AG04449 (cell line): ENCODE measurements at regions of chr16 and their contacts with region 1.

Region 1: GRCh38 chr16:57591086-57591869 is 37.2 kb upstream of the ADGRG1 start:
- DNase-seq: no peak
- H3K4me3 ChIP-seq: no peak overlapping the region; the same call in 1 of the 2 replicates
- CTCF ChIP-seq: peak; percentile 91

Region 2: GRCh38 chr16:57485916-57486857 is 105.1 kb before region 1 on chr16 and contains the start of gene DOK4:
- CTCF ChIA-PET with region 1: no interaction called
- POLR2A ChIA-PET with region 1: no interaction called
- DNase-seq: no peak
- H3K4me3 ChIP-seq: peak within 1 kb of the TSS; percentile 70
- CTCF ChIP-seq: no peak

Region 3: GRCh38 chr16:57517397-57518367 is 73.6 kb before region 1 on chr16:
- CTCF ChIA-PET with region 1: no interaction called
- POLR2A ChIA-PET with region 1: no interaction called
- DNase-seq: no peak
- H3K4me3 ChIP-seq: no peak overlapping the region
- CTCF ChIP-seq: no peak

Region 4: GRCh38 chr16:57609541-57610401 is 18.5 kb after region 1 on chr16:
- CTCF ChIA-PET with region 1: interaction called, 24 read pairs
- POLR2A ChIA-PET with region 1: no interaction called
- DNase-seq: no peak
- H3K4me3 ChIP-seq: no peak overlapping the region
- CTCF ChIP-seq: no peak

Region 5: GRCh38 chr16:57628008-57628781 is 36.9 kb after region 1 on chr16 and contains the start of gene ADGRG1:
- CTCF ChIA-PET with region 1: interaction called, 19 read pairs
- POLR2A ChIA-PET with region 1: no interaction called
- DNase-seq: peak; percentile 71
- H3K4me3 ChIP-seq: peak within 1 kb of the TSS; percentile 54
- CTCF ChIP-seq: peak; percentile 16

Region 6: DNA sequence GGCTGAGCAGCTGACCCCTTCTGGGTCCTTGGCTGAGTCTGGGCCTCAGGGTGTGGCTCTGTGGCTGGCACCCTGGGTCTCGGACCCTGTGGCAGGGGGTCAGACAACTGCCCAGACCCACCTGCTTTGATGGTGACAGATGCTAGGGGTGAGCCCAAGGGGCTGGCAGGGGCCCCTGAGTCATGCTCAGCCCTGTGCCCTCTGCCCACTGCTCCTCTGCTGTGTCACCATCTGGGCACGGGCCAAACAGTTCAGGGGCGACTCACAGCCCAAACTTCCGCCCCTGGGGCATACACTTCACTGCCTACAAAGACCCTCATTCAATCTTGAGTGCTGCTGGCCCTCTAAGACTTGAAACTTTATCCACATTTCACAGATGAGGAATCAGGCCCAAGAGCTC is 42.9 kb after region 1 on chr16:
- CTCF ChIA-PET with region 1: interaction called, 22 read pairs
- POLR2A ChIA-PET with region 1: no interaction called
- DNase-seq: no peak
- H3K4me3 ChIP-seq: no peak overlapping the region
- CTCF ChIP-seq: no peak

Region 7: GRCh38 chr16:57639172-57639887 is 48.1 kb after region 1 on chr16:
- CTCF ChIA-PET with region 1: interaction called, 22 read pairs
- POLR2A ChIA-PET with region 1: no interaction called
- DNase-seq: no peak
- H3K4me3 ChIP-seq: no peak overlapping the region
- CTCF ChIP-seq: no peak